ENCODE measurements at regions of chr9 and their contacts with region 1.

Region 1: DNA sequence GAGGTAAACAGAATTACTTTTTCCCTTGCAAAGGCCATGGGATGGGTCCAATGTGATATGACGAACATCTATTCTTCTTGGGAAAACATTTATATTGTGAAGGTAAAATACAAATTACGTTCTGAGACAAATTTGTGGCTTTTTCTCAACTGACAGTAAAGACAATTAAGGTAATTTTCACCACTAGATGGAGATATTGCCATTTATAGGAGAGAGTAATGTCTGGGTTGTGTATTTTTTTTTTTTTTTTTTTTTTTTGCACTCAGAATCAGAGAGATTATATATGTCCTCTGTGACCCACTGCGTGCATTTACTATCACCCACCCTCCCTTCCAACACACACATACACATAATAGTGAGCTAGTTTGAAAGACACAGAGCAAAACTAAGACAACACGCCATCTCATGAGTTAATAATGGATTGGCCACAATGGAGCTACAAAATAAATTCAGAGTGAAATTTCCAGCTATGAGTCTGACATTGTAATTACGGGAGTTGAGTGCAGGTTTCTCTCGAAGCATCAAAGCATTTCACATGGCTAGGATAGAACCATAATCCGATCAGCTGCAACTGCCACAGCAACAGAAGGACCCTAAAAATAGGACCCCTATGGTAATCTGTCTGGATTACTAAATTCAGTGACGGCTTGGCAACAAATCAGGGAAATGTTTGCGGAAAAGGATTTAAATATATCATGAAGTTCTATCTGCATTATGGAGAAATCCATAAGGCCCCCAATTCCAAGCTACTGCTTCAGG is 49.2 kb downstream of the ANXA1 start:
- DNase-seq: no peak
- H3K4me3 ChIP-seq: no peak overlapping the region
- H3K27ac ChIP-seq: no peak overlapping the region
- H3K4me1 ChIP-seq: no peaks in the 10 kb centered on the region
- H3K27me3 ChIP-seq: no peaks in the 10 kb centered on the region
- CTCF ChIP-seq: peak; percentile 26 to 47 (median 37)
- EP300 ChIP-seq: no peak
- POLR2A ChIP-seq: no peak

Region 2: DNA sequence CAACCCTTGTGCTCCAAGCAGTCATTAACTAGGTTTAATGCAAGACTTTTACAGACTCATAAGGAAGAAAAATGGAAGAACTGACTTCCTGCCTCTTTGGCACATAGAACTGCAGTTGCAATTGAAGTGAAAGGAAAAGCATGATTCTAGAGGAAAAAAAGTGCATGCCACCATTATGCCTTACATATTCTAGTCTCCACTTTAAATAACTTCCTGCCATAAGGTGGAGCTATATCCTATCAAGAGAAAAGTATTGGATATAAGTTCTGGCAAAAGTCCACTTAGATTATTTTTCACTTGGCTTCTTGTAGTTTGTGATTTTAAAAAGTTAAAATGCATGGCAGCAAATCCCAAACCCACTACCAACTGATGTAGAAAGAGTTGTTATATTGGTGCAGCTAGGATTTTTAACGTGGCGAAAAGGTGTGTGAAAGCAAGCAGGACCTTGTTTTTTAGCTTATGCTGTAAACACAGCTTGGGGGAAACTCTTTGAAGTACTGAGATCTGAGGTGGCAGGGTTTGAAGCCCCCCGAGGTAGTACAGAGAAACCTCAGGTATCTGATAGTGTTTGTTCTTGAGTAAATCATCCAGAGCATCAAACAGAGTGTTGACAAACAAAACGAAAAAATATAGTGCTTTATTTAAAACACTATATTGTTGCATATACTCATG is 68.7 kb after region 1 on chr9:
- in situ Hi-C with region 1: no loop called
- intact Hi-C with region 1: no loop called
- DNase-seq: no peak
- H3K4me3 ChIP-seq: no peak overlapping the region
- H3K27ac ChIP-seq: no peak overlapping the region
- H3K4me1 ChIP-seq: no peaks in the 10 kb centered on the region
- H3K27me3 ChIP-seq: no peaks in the 10 kb centered on the region
- CTCF ChIP-seq: no peak
- EP300 ChIP-seq: no peak
- POLR2A ChIP-seq: no peak

Region 3: GRCh38 chr9:74570879-74571512 is 1370.1 kb after region 1 on chr9:
- in situ Hi-C with region 1: loop called in 2 of 4 experiments (anchors 25 kb)
- intact Hi-C with region 1: no loop called
- DNase-seq: no peak
- H3K4me3 ChIP-seq: no peak overlapping the region
- H3K27ac ChIP-seq: no peak overlapping the region
- H3K4me1 ChIP-seq: no peaks in the 10 kb centered on the region
- H3K27me3 ChIP-seq: no peaks in the 10 kb centered on the region
- CTCF ChIP-seq: peak; percentile 49 to 63 (median 51)
- EP300 ChIP-seq: no peak
- POLR2A ChIP-seq: no peak

Measured in transverse colon (tissue), 4 donors.